OCI-LY7 (cell line): ENCODE measurements at regions of chr2 and their contacts with region 1.

Region 1: DNA sequence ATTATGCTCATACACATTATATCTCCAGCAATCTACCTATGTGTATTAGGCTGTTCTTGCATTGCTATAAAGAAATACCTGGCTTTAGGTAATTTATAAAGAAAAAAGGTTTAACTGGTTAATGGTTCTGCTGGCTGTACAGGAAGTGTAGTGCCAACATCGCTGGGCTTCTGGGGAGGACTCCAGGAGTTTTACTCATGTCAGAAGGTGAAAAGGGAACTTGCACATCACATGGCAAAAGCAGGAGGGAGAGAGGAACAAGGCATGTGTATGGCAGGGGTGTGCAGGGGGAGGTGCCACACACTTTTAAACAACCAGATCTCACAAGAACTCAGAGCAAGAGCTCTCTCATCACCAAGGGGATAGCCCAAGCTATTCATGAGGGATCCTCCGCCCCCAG is 715.4 kb upstream of the ZEB2 start:
- DNase-seq: no peak
- H3K4me3 ChIP-seq: no peak overlapping the region
- H3K27ac ChIP-seq: no peak overlapping the region
- H3K4me1 ChIP-seq: no peaks in the 10 kb centered on the region
- CTCF ChIP-seq: no peak

Region 2: GRCh38 chr2:143901185-143901842 is 1334.0 kb before region 1 on chr2:
- CTCF ChIA-PET with region 1: no interaction called
- POLR2A ChIA-PET with region 1: interaction called, 12 read pairs
- intact Hi-C with region 1: no loop called
- DNase-seq: no peak
- H3K4me3 ChIP-seq: no peak overlapping the region
- H3K27ac ChIP-seq: no peak overlapping the region
- H3K4me1 ChIP-seq: no peaks in the 10 kb centered on the region
- CTCF ChIP-seq: no peak

Region 3: DNA sequence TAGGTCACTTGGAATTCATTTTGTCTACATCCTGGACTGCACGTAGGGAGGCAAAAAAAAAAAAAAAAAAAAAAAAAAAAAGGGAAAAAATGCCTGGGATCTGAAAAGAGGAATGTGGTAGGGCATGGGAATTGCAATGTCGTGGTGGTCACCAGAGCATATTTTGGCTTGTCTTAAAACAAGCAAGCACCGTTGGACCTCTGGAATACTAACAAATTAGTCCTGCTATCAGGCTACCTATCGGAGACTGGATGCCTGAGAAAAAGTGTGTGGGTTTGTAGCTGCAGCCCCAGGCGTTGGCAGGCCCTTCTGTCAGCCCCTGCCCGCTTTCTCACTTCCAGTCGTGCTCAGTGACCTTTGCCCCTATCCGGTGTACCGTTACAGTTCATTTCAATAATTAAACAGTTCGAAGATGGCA is 126.9 kb before region 1 on chr2:
- CTCF ChIA-PET with region 1: no interaction called
- POLR2A ChIA-PET with region 1: no interaction called
- intact Hi-C with region 1: no loop called
- DNase-seq: no peak
- H3K4me3 ChIP-seq: no peak overlapping the region
- H3K27ac ChIP-seq: no peak overlapping the region
- H3K4me1 ChIP-seq: no peaks in the 10 kb centered on the region
- CTCF ChIP-seq: no peak

Region 4: DNA sequence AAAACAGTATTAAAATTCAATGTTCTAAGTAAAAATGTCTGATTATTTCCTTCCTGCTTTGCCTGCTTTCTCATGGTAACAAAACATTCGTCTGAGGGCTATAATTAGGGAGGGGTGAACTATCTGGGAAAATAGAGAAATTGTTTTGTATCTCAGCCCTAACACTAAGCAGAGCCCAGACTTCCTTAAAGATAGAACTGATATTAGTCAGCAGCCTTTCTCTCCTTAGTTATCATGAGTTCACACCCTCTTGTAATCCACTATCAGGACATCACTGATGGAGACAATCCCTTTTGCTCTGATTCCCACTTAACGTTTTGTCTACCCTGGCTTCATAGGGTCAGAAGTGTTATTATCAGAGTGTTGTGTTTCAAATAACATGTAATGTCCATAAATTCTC is 14.3 kb before region 1 on chr2:
- CTCF ChIA-PET with region 1: interaction called, 3 read pairs
- POLR2A ChIA-PET with region 1: interaction called, 11 read pairs
- intact Hi-C with region 1: no loop called
- DNase-seq: peak; percentile 13
- H3K4me3 ChIP-seq: no peak overlapping the region
- H3K27ac ChIP-seq: peak overlapping the region; percentile 80
- H3K4me1 ChIP-seq: peaks cover 36% of the 10 kb centered on the region
- CTCF ChIP-seq: no peak

Region 5: GRCh38 chr2:145253492-145253891 is 18.2 kb after region 1 on chr2:
- CTCF ChIA-PET with region 1: no interaction called
- POLR2A ChIA-PET with region 1: interaction called, 24 read pairs
- intact Hi-C with region 1: no loop called
- DNase-seq: no peak
- H3K4me3 ChIP-seq: no peak overlapping the region
- H3K27ac ChIP-seq: no peak overlapping the region
- H3K4me1 ChIP-seq: no peaks in the 10 kb centered on the region
- CTCF ChIP-seq: no peak

Region 6: GRCh38 chr2:145360129-145360790 is 124.9 kb after region 1 on chr2:
- CTCF ChIA-PET with region 1: no interaction called
- POLR2A ChIA-PET with region 1: interaction called, 11 read pairs
- intact Hi-C with region 1: no loop called
- DNase-seq: no peak
- H3K4me3 ChIP-seq: no peak overlapping the region
- H3K27ac ChIP-seq: no peak overlapping the region
- H3K4me1 ChIP-seq: no peaks in the 10 kb centered on the region
- CTCF ChIP-seq: no peak

Region 7: GRCh38 chr2:145460151-145460550 is 224.8 kb after region 1 on chr2:
- CTCF ChIA-PET with region 1: no interaction called
- POLR2A ChIA-PET with region 1: interaction called, 12 read pairs
- intact Hi-C with region 1: no loop called
- DNase-seq: no peak
- H3K4me3 ChIP-seq: no peak overlapping the region
- H3K27ac ChIP-seq: no peak overlapping the region
- H3K4me1 ChIP-seq: no peaks in the 10 kb centered on the region
- CTCF ChIP-seq: no peak